ENCODE measurements at regions of chr9 and their contacts with region 1.

Region 1: GRCh38 chr9:135757356-135757755 is 55.4 kb downstream of the KCNT1 start:
- DNase-seq: no peak
- H3K4me3 ChIP-seq: no peak overlapping the region
- H3K27ac ChIP-seq: no peak overlapping the region
- H3K4me1 ChIP-seq: no peaks in the 10 kb centered on the region
- H3K27me3 ChIP-seq: no peaks in the 10 kb centered on the region
- CTCF ChIP-seq: no peak
- EP300 ChIP-seq: no peak
- POLR2A ChIP-seq: no peak

Region 2: GRCh38 chr9:135692410-135692809 is 64.9 kb before region 1 on chr9:
- intact Hi-C with region 1: loop called in 1 of 4 experiments (anchors 10 kb)
- DNase-seq: no peak
- H3K4me3 ChIP-seq: no peak overlapping the region
- H3K27ac ChIP-seq: no peak overlapping the region
- H3K4me1 ChIP-seq: no peaks in the 10 kb centered on the region
- H3K27me3 ChIP-seq: no peaks in the 10 kb centered on the region
- CTCF ChIP-seq: no peak
- EP300 ChIP-seq: no peak
- POLR2A ChIP-seq: no peak

Region 3: GRCh38 chr9:135779571-135779970 is 22.2 kb after region 1 on chr9:
- intact Hi-C with region 1: loop called in 1 of 4 experiments (anchors 1 kb)
- DNase-seq: no peak
- H3K4me3 ChIP-seq: no peak overlapping the region
- H3K27ac ChIP-seq: no peak overlapping the region
- H3K4me1 ChIP-seq: no peaks in the 10 kb centered on the region
- H3K27me3 ChIP-seq: no peaks in the 10 kb centered on the region
- CTCF ChIP-seq: no peak
- EP300 ChIP-seq: no peak
- POLR2A ChIP-seq: no peak

Region 4: DNA sequence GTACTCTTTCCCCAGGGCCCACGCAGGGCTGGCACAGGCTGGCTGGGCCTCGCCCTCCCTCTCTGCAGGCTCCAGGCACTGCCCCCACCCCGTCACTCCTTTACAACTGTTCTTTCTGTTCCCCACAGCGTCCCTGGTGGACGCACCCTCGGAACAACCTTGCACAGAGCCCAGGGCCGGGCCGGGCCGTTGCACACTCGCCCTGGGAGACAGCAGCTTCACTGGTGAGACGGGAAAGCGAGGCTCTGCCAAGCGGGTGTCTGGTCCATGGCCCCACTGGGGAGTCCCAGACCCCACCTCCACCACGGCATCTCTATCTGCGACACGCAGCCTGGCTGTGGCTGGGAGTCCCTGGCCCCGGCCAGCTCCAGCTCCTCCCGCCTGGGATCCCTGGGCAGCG is 506.7 kb after region 1 on chr9:
- intact Hi-C with region 1: no loop called
- DNase-seq: no peak
- H3K4me3 ChIP-seq: no peak overlapping the region
- H3K27ac ChIP-seq: no peak overlapping the region
- H3K4me1 ChIP-seq: peaks cover 5% of the 10 kb centered on the region
- H3K27me3 ChIP-seq: no peaks in the 10 kb centered on the region
- CTCF ChIP-seq: no peak
- EP300 ChIP-seq: no peak
- POLR2A ChIP-seq: no peak

Region 5: GRCh38 chr9:136283291-136284235 is 526.2 kb after region 1 on chr9:
- intact Hi-C with region 1: no loop called
- DNase-seq: peak; percentile 67 to 84 (median 76)
- H3K4me3 ChIP-seq: no peak overlapping the region
- H3K27ac ChIP-seq: no peak overlapping the region
- H3K4me1 ChIP-seq: no peaks in the 10 kb centered on the region
- H3K27me3 ChIP-seq: no peaks in the 10 kb centered on the region
- CTCF ChIP-seq: peak; percentile 63 to 75 (median 68)
- EP300 ChIP-seq: no peak
- POLR2A ChIP-seq: no peak

Measured in ovary (tissue), 10 donors.